Activated naive CD4-positive, alpha-beta T cell treated with anti-CD3 and anti-CD28 coated beads for 36 hours (primary cell): ENCODE measurements at regions of chr10 and their contacts with region 1.

Region 1: GRCh38 chr10:3785257-3785850 is 345 bp upstream of the KLF6 start:
- DNase-seq: peak; percentile 99
- H3K4me3 Mint-ChIP-seq: peak overlapping the region; percentile 96
- H3K27ac Mint-ChIP-seq: peak overlapping the region; percentile 99
- H3K4me1 Mint-ChIP-seq: peaks cover 30% of the 10 kb centered on the region
- H3K27me3 Mint-ChIP-seq: no peaks in the 10 kb centered on the region

Region 2: GRCh38 chr10:3452173-3452626 is 333.2 kb before region 1 on chr10:
- CTCF ChIA-PET with region 1: no interaction called
- intact Hi-C with region 1: loop called (anchors 2 kb)
- DNase-seq: no peak
- H3K4me3 Mint-ChIP-seq: no peak overlapping the region
- H3K27ac Mint-ChIP-seq: no peak overlapping the region
- H3K4me1 Mint-ChIP-seq: peaks cover 39% of the 10 kb centered on the region
- H3K27me3 Mint-ChIP-seq: no peaks in the 10 kb centered on the region

Region 3: DNA sequence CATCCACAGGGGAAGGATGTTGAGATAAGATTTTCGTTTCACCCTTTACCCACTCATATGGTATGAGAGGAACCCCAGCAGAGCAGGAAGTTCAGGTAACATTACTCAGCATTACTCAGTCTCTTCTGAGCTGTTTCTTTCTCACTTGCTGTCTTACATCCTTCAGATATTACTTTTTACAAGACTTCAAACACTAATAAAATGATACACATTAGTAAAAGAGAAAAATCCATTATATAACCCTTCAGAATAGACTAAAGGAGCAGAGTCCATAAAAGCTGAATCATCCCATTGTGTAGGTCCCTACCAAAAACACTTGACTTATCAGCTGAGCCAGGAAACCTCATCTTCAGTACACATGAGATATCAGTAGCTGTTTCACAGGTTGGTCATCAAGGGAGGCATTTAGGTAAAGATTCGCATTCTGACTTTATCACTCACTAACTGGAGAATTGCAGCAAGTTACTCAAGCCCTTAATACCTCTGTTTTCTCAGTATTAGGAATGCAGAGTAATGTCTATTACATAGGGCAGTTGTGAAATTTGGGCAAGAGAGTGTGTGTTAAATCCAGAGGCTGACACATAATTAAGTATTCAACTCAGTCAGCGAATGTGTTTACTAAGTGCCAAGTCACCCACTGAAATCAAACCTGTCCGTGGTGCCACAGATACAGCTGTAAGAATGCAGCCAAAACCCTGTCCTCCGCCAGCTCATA is 45.0 kb before region 1 on chr10:
- CTCF ChIA-PET with region 1: no interaction called
- intact Hi-C with region 1: loop called (anchors 1 kb)
- DNase-seq: no peak
- H3K4me3 Mint-ChIP-seq: no peak overlapping the region
- H3K27ac Mint-ChIP-seq: peak overlapping the region; percentile 59
- H3K4me1 Mint-ChIP-seq: peaks cover 31% of the 10 kb centered on the region
- H3K27me3 Mint-ChIP-seq: no peaks in the 10 kb centered on the region

Region 4: DNA sequence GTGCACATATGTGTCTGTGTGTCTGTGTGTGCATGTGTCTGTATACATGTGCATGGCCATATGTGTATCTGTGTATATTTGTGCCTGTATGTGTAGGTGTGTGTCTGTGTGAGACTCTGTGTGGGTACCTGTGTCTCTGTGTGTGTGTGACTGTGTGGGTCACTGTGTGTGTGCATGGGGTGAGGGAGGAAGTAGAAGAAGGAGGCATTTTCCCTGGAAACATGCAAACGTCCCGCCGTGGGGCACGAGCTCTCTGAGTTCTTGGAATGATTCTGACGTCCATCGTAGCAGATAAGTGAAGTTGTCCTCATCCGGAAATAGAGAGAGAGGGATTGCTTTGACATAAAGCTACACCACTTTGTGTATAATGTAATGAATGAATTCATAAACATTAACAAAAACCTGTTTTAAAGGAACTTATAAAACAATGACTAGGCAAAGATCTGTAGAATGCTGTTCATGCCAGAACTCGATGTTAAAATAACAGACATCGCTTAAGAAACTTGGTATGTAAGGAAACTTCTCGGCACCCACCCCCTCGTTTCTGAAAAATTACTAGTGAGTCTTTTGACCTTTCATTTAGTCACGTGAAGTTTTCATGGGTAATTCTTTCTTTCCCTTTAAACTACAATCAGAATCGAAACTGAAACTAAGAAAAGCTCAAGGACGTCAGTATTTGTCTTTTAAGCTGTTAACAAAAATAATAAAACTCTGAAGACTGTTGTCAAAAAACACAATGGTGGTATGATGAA is 43.2 kb after region 1 on chr10:
- CTCF ChIA-PET with region 1: no interaction called
- intact Hi-C with region 1: loop called (anchors 1 kb)
- DNase-seq: peak; percentile 82
- H3K4me3 Mint-ChIP-seq: peak overlapping the region; percentile 52
- H3K27ac Mint-ChIP-seq: peak overlapping the region; percentile 87
- H3K4me1 Mint-ChIP-seq: peaks cover 43% of the 10 kb centered on the region
- H3K27me3 Mint-ChIP-seq: no peaks in the 10 kb centered on the region

Region 5: DNA sequence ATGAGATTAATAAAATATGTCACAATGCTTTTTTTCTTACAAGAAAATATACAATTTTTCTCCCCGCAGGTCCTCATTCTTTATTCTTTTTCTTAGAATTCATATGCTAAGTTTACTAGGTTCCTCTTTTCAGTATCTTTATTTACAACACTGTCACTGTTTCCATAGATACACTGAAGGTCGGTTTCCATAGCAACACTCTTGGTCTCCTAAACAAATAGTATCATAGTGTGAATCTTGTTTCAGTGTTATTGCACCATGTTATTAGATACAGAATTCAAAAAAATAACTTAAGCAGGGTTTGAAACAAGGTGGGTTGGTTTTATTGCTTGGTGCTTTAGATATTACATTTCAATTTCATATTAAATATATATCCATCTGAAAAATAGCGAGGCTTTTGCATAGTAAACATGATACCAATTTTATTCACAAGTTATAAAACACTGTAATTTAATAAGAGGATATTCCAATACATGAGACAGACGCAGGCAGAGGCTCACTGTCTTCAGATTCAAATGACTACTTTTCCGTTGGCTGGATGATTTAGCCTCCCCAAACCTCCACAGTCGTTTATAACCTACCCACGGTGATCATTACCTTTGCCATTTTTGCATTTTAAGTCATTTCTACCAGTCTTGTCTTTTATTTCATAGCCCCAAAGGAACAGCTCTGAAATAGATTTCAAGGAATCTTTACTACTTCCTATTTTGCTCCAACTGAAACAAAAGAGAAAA is 88.5 kb after region 1 on chr10:
- CTCF ChIA-PET with region 1: no interaction called
- intact Hi-C with region 1: loop called (anchors 1 kb)
- DNase-seq: no peak
- H3K4me3 Mint-ChIP-seq: no peak overlapping the region
- H3K27ac Mint-ChIP-seq: peak overlapping the region; percentile 36
- H3K4me1 Mint-ChIP-seq: peaks cover 52% of the 10 kb centered on the region
- H3K27me3 Mint-ChIP-seq: no peaks in the 10 kb centered on the region

Region 6: GRCh38 chr10:4576206-4576605 is 790.9 kb after region 1 on chr10:
- CTCF ChIA-PET with region 1: no interaction called
- intact Hi-C with region 1: no loop called
- DNase-seq: no peak
- H3K4me3 Mint-ChIP-seq: no peak overlapping the region
- H3K27ac Mint-ChIP-seq: no peak overlapping the region
- H3K4me1 Mint-ChIP-seq: no peaks in the 10 kb centered on the region
- H3K27me3 Mint-ChIP-seq: peaks cover 1% of the 10 kb centered on the region